ENCODE measurements at regions of chr7 and their contacts with region 1.

Region 1: DNA sequence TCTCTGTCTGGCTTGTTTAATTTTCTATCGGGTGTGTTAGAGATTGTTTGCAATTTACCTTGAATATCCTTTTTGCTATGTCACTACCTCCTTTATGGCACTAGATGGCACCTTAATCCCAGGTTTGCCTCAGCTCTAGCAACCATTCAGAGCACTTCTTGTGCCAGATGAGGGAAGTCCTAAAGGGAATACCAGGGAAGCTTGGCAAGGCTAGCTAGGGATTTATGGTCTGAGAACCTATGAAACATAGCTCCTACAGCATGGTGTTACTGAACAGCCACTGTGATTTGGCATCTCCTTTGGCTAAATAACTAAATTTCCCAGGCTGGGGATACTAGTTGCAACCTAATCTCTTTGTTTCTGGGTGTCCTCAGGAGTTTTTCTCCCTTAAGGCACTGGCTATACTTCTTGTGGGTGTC is 69.0 kb upstream of the VOPP1 start:
- DNase-seq: peak; percentile 11
- H3K4me3 Mint-ChIP-seq: no peak overlapping the region
- H3K27ac Mint-ChIP-seq: no peak overlapping the region
- H3K4me1 Mint-ChIP-seq: peaks cover 11% of the 10 kb centered on the region
- H3K27me3 Mint-ChIP-seq: peaks cover 7% of the 10 kb centered on the region

Region 2: GRCh38 chr7:55723621-55723941 is 82.3 kb after region 1 on chr7:
- intact Hi-C with region 1: loop called (anchors 2 kb)
- DNase-seq: no peak
- H3K4me3 Mint-ChIP-seq: no peak overlapping the region
- H3K27ac Mint-ChIP-seq: no peak overlapping the region
- H3K4me1 Mint-ChIP-seq: no peaks in the 10 kb centered on the region
- H3K27me3 Mint-ChIP-seq: no peaks in the 10 kb centered on the region

Region 3: GRCh38 chr7:55951637-55952351 is 310.5 kb after region 1 on chr7 and contains the start of gene MRPS17:
- intact Hi-C with region 1: loop called (anchors 2 kb)
- DNase-seq: peak; percentile 92
- H3K4me3 Mint-ChIP-seq: peak within 1 kb of the TSS; percentile 92
- H3K27ac Mint-ChIP-seq: peak within 1 kb of the TSS; percentile 92
- H3K4me1 Mint-ChIP-seq: peaks cover 10% of the 10 kb centered on the region
- H3K27me3 Mint-ChIP-seq: no peaks in the 10 kb centered on the region
- total RNA-seq, gene MRPS17: 38.2 and 39.3 TPM in 2 replicates

Region 4: DNA sequence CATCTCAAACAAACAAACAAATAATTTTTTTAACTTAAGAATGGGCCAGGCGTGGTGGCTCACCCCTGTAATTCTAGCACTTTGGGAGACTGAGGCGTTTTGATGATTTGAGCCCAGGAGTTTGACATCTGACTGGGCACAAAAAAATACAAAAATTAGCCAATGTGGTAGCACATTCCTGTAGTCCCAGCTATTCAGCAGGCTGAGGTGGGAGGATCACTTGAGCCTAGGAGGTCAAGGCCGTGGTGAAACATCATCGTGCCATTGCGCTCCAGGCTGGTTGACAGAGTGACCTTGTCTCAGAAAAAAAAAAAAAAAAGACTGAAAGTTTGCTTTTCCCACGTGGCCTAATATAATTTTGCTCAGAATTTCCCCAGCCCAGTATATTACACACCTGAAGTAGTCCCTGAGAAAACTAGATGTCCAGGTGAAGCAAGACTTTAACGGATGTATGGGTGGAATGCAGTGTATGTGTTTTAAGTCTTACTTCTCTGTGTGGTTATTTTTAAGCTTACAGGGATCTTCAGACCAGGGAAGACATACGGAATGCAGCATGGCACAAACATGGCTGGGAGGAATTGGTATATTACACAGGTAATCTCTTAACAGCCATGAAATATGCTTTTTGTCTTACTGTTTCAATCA is 355.7 kb after region 1 on chr7:
- intact Hi-C with region 1: loop called (anchors 1 kb)
- DNase-seq: no peak
- H3K4me3 Mint-ChIP-seq: no peak overlapping the region
- H3K27ac Mint-ChIP-seq: no peak overlapping the region
- H3K4me1 Mint-ChIP-seq: peaks cover 16% of the 10 kb centered on the region
- H3K27me3 Mint-ChIP-seq: no peaks in the 10 kb centered on the region

Region 5: DNA sequence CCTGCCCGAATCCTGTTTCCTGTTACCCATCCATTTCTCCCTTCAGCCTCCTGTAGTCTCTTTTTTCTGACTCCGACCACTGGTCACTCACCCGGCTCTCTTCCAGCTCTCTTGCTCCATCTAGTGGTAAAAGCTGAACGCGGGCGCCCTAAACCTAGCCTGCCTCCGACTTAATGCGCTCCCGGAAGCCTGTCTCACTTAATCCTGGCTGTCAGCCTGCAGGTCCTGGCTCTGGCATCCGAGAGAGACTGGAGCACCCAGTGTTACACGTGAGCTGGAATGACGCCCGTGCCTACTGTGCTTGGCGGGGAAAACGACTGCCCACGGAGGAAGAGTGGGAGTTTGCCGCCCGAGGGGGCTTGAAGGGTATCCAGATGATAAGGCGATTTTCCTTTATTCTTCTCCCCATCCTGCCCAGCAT is 433.1 kb after region 1 on chr7:
- intact Hi-C with region 1: loop called (anchors 1 kb)
- DNase-seq: peak; percentile 59
- H3K4me3 Mint-ChIP-seq: no peak overlapping the region
- H3K27ac Mint-ChIP-seq: peak overlapping the region; percentile 24
- H3K4me1 Mint-ChIP-seq: peaks cover 5% of the 10 kb centered on the region
- H3K27me3 Mint-ChIP-seq: no peaks in the 10 kb centered on the region

Measured in activated T-helper 1 cell treated with anti-CD3 and anti-CD28 coated beads, Interleukin-12 subunit alpha, Interleukin-12 subunit beta, Interleukin-2, Interleukin-4 antibody, amounts not matched to agents 30 ng/mL and 10 ng/mL and 1 ng/mL, durations not matched to agents 14 hours and 24 hours and 36 hours (primary cell).